Activated CD4-positive, alpha-beta memory T cell treated with anti-CD3 and anti-CD28 coated beads for 36 hours (primary cell): ENCODE measurements at regions of chr6 and their contacts with region 1.

Region 1: DNA sequence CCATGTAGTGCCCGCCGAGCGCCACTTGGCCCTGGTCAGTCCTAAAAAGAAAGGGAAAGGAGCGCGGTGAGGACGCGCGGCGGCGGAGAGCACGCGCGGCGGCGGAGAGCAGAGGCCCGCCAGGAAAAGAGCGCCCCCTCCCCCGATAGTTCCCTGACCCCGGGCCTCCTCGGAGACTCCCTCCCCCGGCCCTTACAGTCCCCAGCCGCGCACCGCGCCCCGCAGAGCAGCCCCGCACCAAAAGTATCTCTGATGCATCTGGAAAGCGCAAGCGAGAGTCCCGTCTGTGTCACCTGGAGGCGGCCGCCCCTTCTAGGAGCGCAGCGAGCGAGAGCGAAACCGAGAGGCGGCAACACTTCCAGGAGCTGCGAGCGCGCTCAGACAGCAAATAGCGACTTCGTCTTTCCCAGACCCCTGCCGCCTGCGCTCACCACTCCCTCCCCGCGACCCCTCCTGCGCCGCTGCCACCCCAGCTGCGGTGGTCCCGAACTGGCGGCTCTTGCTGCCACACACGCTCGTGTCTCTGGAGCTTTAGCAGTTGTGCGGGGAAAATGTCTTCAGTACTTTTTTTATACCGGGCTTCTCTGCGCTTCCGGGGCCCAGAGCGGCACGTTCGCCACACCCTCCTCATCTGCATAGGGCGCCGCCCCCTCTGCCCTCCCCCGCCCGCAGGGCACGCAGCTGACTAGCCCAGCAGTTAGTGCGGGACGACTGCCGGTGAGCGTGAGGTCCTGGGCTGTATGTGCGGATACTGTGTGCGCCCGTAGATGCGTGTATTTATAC is at the start of gene TENT5A:
- DNase-seq: peak; percentile 89
- H3K4me3 Mint-ChIP-seq: peak within 1 kb of the TSS; percentile 85
- H3K27ac Mint-ChIP-seq: peak within 1 kb of the TSS; percentile 72
- H3K4me1 Mint-ChIP-seq: peaks cover 33% of the 10 kb centered on the region
- H3K27me3 Mint-ChIP-seq: peaks cover 17% of the 10 kb centered on the region
- total RNA-seq, gene TENT5A: 0.51 to 1.1 TPM

Region 2: DNA sequence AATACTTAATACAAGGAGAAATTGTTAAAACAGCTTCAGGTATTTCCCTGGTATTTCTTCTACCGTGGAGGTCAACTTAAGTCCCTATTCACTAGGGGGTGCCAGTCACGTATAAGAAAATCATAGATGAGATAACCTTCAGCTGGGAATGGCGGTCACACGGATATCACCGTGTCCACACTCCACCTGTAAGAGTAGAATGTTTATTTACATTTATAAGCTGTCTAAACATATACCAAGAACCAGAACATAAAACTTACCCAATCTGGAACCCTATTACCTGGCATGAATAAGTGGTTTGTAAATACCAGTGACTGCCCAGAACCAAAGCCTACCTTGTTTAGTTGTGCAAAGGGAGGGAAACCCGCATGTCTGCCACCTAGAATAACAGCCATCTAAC is 1803.1 kb before region 1 on chr6:
- CTCF ChIA-PET with region 1: interaction called, 3 read pairs
- POLR2A ChIA-PET with region 1: no interaction called
- intact Hi-C with region 1: loop called (anchors 5 kb)
- DNase-seq: peak; percentile 68
- H3K4me3 Mint-ChIP-seq: no peak overlapping the region
- H3K27ac Mint-ChIP-seq: no peak overlapping the region
- H3K4me1 Mint-ChIP-seq: peaks cover 15% of the 10 kb centered on the region
- H3K27me3 Mint-ChIP-seq: peaks cover 22% of the 10 kb centered on the region

Region 3: DNA sequence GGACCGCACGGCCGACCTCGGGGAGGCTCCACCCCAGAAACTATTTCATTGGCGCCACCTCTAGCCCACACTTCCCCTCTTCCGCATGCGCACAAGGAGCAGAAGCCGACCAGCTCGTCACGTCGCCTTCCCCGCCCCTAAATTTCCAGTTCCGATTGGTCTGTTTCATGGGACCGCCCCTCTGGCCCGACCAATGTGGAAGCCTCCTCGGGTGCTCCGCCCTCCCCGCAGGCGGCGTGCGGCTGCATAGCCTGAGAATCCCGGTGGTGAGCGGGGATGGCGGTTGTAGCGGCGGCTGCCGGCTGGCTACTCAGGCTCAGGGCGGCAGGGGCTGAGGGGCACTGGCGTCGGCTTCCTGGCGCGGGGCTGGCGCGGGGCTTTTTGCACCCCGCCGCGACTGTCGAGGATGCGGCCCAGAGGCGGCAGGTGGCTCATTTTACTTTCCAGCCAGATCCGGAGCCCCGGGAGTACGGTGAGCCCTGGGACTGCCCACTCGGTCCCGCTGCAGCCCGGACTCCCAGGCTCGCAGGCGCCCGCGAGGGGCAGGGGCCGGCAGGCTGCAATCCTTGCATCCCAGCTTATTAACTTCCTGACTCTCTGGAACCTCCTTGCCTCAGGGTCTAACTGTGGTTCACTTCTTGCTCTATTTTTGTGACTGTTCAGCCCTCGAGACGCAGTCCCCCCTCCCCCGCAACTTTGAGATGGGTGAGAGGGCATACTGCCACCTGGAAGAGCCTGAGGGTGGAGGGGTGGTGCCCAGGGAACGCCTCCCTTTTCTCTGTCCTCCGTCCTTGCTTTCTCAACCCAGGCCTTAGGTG is 1645.7 kb before region 1 on chr6 and contains the start of gene BCKDHB:
- CTCF ChIA-PET with region 1: interaction called, 3 read pairs
- POLR2A ChIA-PET with region 1: no interaction called
- intact Hi-C with region 1: loop called (anchors 1 kb)
- DNase-seq: peak; percentile 99
- H3K4me3 Mint-ChIP-seq: peak within 1 kb of the TSS; percentile 94
- H3K27ac Mint-ChIP-seq: peak within 1 kb of the TSS; percentile 80
- H3K4me1 Mint-ChIP-seq: peaks cover 15% of the 10 kb centered on the region
- H3K27me3 Mint-ChIP-seq: no peaks in the 10 kb centered on the region
- total RNA-seq, gene BCKDHB: 16.4 to 17.7 TPM

Region 4: GRCh38 chr6:80214436-80215022 is 1537.8 kb before region 1 on chr6:
- CTCF ChIA-PET with region 1: no interaction called
- POLR2A ChIA-PET with region 1: no interaction called
- intact Hi-C with region 1: loop called (anchors 1 kb)
- DNase-seq: peak; percentile 23
- H3K4me3 Mint-ChIP-seq: no peak overlapping the region
- H3K27ac Mint-ChIP-seq: no peak overlapping the region
- H3K4me1 Mint-ChIP-seq: peaks cover 7% of the 10 kb centered on the region
- H3K27me3 Mint-ChIP-seq: no peaks in the 10 kb centered on the region

Region 5: GRCh38 chr6:80605165-80605989 is 1147.0 kb before region 1 on chr6:
- CTCF ChIA-PET with region 1: interaction called, 13 read pairs
- POLR2A ChIA-PET with region 1: no interaction called
- intact Hi-C with region 1: loop called (anchors 1 kb)
- DNase-seq: no peak
- H3K4me3 Mint-ChIP-seq: no peak overlapping the region
- H3K27ac Mint-ChIP-seq: no peak overlapping the region
- H3K4me1 Mint-ChIP-seq: no peaks in the 10 kb centered on the region
- H3K27me3 Mint-ChIP-seq: no peaks in the 10 kb centered on the region

Region 6: GRCh38 chr6:81727876-81728517 is 24.3 kb before region 1 on chr6:
- CTCF ChIA-PET with region 1: interaction called, 3 read pairs
- POLR2A ChIA-PET with region 1: interaction called, 3 read pairs
- intact Hi-C with region 1: loop called (anchors 1 kb)
- DNase-seq: peak; percentile 64
- H3K4me3 Mint-ChIP-seq: no peak overlapping the region
- H3K27ac Mint-ChIP-seq: peak overlapping the region; percentile 9
- H3K4me1 Mint-ChIP-seq: peaks cover 12% of the 10 kb centered on the region
- H3K27me3 Mint-ChIP-seq: no peaks in the 10 kb centered on the region

Region 7: DNA sequence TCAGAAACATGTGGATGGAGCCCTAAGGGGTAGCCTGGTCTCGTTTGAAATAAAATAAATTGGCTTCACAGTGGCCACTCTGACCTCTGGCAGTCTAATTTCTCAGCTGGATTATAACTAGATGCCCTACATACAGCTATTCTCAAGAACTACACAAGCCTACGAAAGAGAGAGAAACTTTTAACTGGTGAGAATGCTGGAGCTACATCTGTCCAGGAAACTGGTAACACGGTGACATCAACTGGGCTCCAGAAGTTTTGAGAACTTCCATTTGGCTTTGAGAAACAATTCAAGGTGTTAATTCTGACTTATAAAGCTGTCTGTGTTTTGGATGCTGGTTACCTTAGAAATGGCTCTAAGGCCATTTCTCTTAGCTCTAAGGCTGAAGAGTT is 187.4 kb after region 1 on chr6:
- CTCF ChIA-PET with region 1: no interaction called
- POLR2A ChIA-PET with region 1: no interaction called
- intact Hi-C with region 1: no loop called
- DNase-seq: no peak
- H3K4me3 Mint-ChIP-seq: no peak overlapping the region
- H3K27ac Mint-ChIP-seq: no peak overlapping the region
- H3K4me1 Mint-ChIP-seq: no peaks in the 10 kb centered on the region
- H3K27me3 Mint-ChIP-seq: no peaks in the 10 kb centered on the region

Region 8: DNA sequence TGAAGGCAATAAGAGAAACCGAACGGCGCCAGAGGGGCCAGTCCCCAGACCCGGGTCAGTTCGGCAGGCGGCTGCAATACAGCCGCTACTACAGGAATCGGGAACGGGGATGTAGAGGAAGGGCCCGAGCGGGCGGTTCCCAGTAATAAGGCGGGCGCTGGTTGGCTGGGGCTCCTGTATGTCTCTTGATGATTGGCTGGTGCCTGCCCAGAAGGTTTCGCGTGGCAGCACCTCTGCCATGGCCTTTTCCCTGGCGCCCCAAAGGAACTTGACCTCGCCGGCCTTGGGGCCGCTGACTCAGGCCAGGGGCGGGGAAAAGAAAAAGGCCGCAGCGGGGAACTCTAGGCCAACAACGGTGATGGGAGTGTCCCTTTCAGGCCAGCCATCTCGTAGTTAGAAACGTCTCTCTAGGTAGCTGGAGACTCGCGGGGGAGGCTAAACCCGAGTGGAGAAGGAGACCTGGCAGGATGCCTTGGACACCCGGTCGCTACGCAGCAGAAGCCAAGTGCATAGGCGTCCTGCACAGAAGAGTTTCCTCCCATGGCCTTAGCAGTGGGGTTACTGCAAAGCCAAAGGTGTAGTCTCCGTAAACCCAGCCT is 495.4 kb after region 1 on chr6 and contains the start of gene IBTK:
- CTCF ChIA-PET with region 1: no interaction called
- POLR2A ChIA-PET with region 1: no interaction called
- intact Hi-C with region 1: loop called (anchors 2 kb)
- DNase-seq: peak; percentile 95
- H3K4me3 Mint-ChIP-seq: peak within 1 kb of the TSS; percentile 89
- H3K27ac Mint-ChIP-seq: peak within 1 kb of the TSS; percentile 90
- H3K4me1 Mint-ChIP-seq: peaks cover 27% of the 10 kb centered on the region
- H3K27me3 Mint-ChIP-seq: no peaks in the 10 kb centered on the region
- total RNA-seq, gene IBTK: 30.7 to 32.1 TPM